ENCODE measurements at regions of chr7 and their contacts with region 1.

Region 1: GRCh38 chr7:55255496-55256435 is 109.4 kb upstream of the LANCL2 start:
- DNase-seq: peak; percentile 84
- H3K4me3 Mint-ChIP-seq: peak overlapping the region; percentile 70
- H3K27ac Mint-ChIP-seq: no peak overlapping the region
- H3K4me1 Mint-ChIP-seq: peaks cover 7% of the 10 kb centered on the region
- H3K27me3 Mint-ChIP-seq: peaks cover 54% of the 10 kb centered on the region

Region 2: DNA sequence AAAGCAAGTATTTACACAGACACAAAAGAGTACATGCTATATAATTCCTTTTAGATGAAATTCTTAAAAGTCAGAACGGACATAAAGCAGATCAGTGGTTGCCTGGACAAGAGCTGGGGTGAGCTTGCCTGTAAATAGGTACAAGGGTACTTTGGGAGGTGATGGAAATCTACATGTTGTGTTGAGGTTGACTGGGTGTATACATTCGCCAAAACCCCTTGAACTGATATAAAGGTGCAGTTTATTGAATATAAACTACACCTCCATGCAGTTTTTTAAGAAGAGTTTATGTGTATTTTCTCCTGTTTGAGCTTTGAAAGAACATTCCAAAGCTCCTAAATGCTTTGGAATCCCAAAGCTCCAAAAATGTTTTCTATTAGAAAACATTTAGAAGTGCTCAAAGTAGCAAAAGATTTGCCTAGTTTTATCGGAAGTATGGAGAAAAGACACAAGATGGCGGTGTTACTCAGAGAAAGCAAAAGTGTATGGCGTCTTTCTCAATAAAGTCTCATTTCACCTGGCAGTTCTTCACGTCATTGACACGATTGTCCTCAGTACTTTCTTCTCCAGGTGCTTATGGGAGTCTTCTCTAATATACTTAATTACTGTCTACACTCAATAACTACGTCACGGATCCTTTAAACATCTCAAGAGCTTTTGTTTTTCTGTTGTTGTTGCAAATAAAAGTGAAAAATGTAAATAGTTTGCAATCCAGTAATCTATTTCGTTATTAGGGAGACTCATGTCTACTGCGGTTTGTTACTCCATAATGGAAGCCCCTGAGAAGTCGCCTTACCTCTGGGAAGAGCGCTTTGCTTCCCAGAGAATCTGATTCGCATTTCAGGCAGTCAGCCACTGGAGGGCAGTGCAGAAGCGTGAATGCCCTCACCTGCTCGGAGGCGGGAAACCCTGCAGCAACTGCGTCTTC is 482.0 kb before region 1 on chr7:
- CTCF ChIA-PET with region 1: interaction called, 59 read pairs
- intact Hi-C with region 1: loop called (anchors 1 kb)
- DNase-seq: peak; percentile 86
- H3K4me3 Mint-ChIP-seq: peak overlapping the region; percentile 63
- H3K27ac Mint-ChIP-seq: peak overlapping the region; percentile 22
- H3K4me1 Mint-ChIP-seq: peaks cover 3% of the 10 kb centered on the region
- H3K27me3 Mint-ChIP-seq: peaks cover 17% of the 10 kb centered on the region

Region 3: DNA sequence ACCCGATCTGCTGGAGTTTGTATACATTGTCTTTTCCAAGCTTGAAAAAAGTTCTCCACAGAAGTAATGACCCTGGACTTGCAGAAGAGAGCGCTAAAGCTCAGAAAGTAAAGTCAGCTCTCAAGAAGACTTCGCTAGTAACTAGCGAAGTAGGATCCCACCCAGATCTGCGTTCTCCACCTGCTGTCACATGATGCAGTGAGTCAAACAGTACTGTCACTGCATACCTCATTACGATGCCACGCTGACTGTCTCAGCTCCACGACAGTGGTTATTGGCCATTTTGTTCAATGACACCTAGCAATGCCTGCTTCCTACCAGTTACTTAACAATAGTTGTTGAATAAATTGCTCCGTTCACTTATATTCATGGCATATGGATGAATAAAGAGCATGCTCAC is 467.1 kb before region 1 on chr7:
- CTCF ChIA-PET with region 1: interaction called, 16 read pairs
- intact Hi-C with region 1: loop called (anchors 1 kb)
- DNase-seq: peak; percentile 51
- H3K4me3 Mint-ChIP-seq: no peak overlapping the region
- H3K27ac Mint-ChIP-seq: no peak overlapping the region
- H3K4me1 Mint-ChIP-seq: peaks cover 6% of the 10 kb centered on the region
- H3K27me3 Mint-ChIP-seq: peaks cover 33% of the 10 kb centered on the region

Region 4: GRCh38 chr7:54995631-54996340 is 260.0 kb before region 1 on chr7:
- CTCF ChIA-PET with region 1: no interaction called
- intact Hi-C with region 1: loop called (anchors 1 kb)
- DNase-seq: peak; percentile 59
- H3K4me3 Mint-ChIP-seq: no peak overlapping the region
- H3K27ac Mint-ChIP-seq: peak overlapping the region; percentile 87
- H3K4me1 Mint-ChIP-seq: peaks cover 25% of the 10 kb centered on the region
- H3K27me3 Mint-ChIP-seq: peaks cover 5% of the 10 kb centered on the region

Region 5: GRCh38 chr7:55239406-55239805 is 16.4 kb before region 1 on chr7:
- CTCF ChIA-PET with region 1: interaction called, 11 read pairs
- intact Hi-C with region 1: no loop called
- DNase-seq: no peak
- H3K4me3 Mint-ChIP-seq: no peak overlapping the region
- H3K27ac Mint-ChIP-seq: no peak overlapping the region
- H3K4me1 Mint-ChIP-seq: no peaks in the 10 kb centered on the region
- H3K27me3 Mint-ChIP-seq: peaks cover 2% of the 10 kb centered on the region

Region 6: DNA sequence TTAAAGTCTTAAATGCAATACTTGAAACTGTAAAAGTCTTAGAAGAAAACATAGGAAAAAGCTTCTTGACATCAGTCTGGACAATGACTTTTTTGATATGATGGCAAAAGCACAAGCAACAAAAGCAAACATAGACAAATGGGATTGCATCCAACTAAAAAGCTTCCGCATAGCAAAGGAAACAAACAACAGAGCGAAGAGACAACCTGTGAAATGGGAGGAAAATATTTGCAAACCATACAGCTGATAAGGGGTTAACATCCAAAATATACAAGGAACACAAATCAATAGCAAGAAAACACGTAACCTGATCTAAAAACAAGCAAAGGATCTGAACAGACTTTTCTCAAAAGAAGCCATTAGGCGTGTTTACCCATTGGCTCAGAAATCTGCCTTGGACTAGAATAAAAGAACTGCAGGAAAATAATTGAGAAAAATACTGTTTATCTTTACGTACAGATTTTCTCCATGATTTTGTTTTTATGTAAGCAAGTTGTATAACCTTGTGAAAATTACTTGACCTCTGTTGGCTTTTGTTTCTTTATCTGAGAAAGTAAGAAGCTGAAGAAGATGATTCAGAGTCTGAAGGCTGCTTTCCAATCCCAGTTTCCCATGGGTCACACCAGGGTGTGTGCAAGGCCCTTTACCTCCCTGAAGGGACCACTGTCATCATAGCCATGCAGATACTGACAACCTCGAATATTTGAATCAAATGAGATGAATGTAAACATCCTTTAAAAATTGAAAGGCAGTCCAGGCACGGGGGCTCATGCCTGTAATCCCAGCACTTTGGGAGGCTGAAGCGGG is 10.3 kb after region 1 on chr7:
- CTCF ChIA-PET with region 1: interaction called, 15 read pairs
- intact Hi-C with region 1: no loop called
- DNase-seq: no peak
- H3K4me3 Mint-ChIP-seq: no peak overlapping the region
- H3K27ac Mint-ChIP-seq: no peak overlapping the region
- H3K4me1 Mint-ChIP-seq: no peaks in the 10 kb centered on the region
- H3K27me3 Mint-ChIP-seq: peaks cover 3% of the 10 kb centered on the region

Measured in activated naive CD4-positive, alpha-beta T cell treated with anti-CD3 and anti-CD28 coated beads for 36 hours (primary cell).